OCI-LY7 (cell line): ENCODE measurements at regions of chr9 and their contacts with region 1.

Region 1: DNA sequence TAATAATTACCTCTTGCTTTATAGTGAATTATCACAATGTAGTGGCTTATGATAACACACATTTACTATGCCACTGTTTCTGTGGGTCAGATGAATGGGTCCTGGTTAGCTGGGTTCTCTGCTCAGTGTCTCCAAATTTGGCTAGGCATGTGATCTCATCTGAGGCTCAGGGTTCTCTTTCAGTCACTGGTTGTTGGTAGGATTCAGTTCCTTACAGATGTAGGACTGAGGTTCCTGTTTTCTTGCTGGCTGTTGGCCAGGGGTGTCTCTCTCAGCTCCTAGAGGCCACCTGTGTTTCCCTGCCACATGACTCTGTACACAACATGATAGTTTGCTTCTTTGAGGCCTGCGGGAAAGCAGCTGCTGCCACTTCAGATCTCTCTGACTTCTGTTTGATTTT is 7.1 kb downstream of the NFX1 start:
- DNase-seq: peak; percentile 94
- H3K4me3 ChIP-seq: peak overlapping the region; percentile 62
- H3K27ac ChIP-seq: peak overlapping the region; percentile 95
- H3K4me1 ChIP-seq: peaks cover 72% of the 10 kb centered on the region
- CTCF ChIP-seq: no peak

Region 2: DNA sequence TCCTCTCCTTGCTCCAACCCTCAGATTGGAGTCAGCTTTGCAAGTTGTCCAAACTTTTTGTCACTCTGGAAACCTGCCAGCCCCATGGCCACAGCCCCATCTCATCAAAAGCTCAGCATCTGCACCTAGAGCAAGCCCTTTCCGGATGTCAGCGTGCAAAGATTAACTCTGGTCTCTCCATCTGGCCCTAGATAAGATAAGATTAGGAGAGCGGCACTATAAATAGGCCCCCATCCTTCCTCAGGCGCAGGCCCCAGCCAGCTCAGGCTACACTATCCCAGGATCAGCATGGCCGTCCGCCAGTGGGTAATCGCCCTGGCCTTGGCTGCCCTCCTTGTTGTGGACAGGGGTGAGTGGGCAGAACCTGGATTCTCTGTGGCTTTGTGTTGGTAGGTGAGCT is 57.5 kb before region 1 on chr9 and contains the start of gene SPINK4:
- CTCF ChIA-PET with region 1: no interaction called
- POLR2A ChIA-PET with region 1: no interaction called
- intact Hi-C with region 1: no loop called
- DNase-seq: no peak
- H3K4me3 ChIP-seq: no peak within 1 kb of the TSS
- H3K27ac ChIP-seq: no peak within 1 kb of the TSS
- H3K4me1 ChIP-seq: no peaks in the 10 kb centered on the region
- CTCF ChIP-seq: no peak
- total RNA-seq, gene SPINK4: 0.51 TPM in 1 of 2 replicates, not detected in the other

Region 3: GRCh38 chr9:33264473-33265177 is 32.8 kb before region 1 on chr9 and contains the starts of genes BAG1 and CHMP5:
- CTCF ChIA-PET with region 1: no interaction called
- POLR2A ChIA-PET with region 1: interaction called, 3 read pairs
- intact Hi-C with region 1: loop called (anchors 1 kb)
- DNase-seq: peak; percentile 99
- H3K4me3 ChIP-seq: peak within 1 kb of the TSS; percentile 77
- H3K27ac ChIP-seq: peak within 1 kb of the TSS; percentile 32
- H3K4me1 ChIP-seq: peaks cover 12% of the 10 kb centered on the region
- CTCF ChIP-seq: no peak
- total RNA-seq, gene BAG1: 48.1 and 68.3 TPM in 2 replicates
- total RNA-seq, gene CHMP5: 31.2 and 39.7 TPM in 2 replicates